Posterior cingulate gyrus (tissue), 11 donors: ENCODE measurements at regions of chr14 and their contacts with region 1.

Region 1: DNA sequence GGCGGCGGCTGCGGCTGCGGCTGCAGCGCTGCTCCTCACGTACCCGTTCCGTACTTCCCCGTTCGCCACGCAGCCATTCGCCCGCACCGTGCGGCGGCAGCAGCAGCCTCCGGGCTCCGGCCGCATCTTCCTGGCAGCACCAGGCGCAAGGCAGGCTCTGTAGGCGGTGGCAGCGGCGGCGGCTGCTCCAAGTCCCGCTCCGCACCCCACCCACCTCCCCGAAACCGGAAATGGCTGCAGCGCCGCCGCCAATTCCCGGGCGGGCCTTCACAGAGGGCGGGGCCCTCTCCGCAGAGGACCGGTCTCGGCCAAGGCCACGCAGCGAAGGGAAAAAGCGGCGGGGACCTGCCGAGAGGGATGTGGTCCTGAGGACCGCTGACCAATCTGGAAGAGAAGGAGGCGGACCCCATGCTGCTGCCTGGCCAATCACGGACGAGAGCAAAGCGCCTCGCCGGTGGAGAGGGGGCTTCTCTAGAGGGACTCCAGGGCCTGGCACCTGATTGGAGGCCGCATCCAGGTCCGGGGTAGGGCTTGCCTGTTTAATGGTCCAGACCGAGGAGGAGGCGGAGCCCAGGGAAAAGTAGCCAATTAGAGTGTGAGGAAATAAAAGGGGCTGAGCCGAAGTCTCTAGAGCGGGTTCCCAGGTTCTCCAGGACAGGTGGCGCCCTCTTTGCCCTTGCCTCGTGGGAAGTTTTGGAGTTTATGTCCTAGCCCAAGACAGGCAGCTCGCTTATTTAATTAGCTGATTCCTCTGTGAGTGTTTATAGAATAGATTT is at the start of gene SPTLC2:
- DNase-seq: peak; percentile 99 to 100 (median 100)

Region 2: GRCh38 chr14:77554207-77554606 is 62.4 kb before region 1 on chr14:
- intact Hi-C with region 1: loop called (anchors 2 kb)
- DNase-seq: no peak

Region 3: GRCh38 chr14:77707724-77708408 is 91.2 kb after region 1 on chr14 and contains the starts of genes ALKBH1 and SLIRP:
- intact Hi-C with region 1: loop called (anchors 5 kb)
- DNase-seq: peak; percentile 83 to 98 (median 89)